Activated CD4-positive, alpha-beta memory T cell treated with anti-CD3 and anti-CD28 coated beads, Interleukin-2, amount 10 ng/mL, durations not matched to agents 7 days and 5 days (primary cell): ENCODE measurements at regions of chr9 and their contacts with region 1.

Region 1: GRCh38 chr9:111621895-111622480 is 9.1 kb upstream of the DNAJC25 start:
- DNase-seq: no peak
- H3K4me3 Mint-ChIP-seq: no peak overlapping the region
- H3K27ac Mint-ChIP-seq: no peak overlapping the region
- H3K4me1 Mint-ChIP-seq: no peaks in the 10 kb centered on the region
- H3K27me3 Mint-ChIP-seq: peaks cover 12% of the 10 kb centered on the region

Region 2: GRCh38 chr9:111597817-111598729 is 23.9 kb before region 1 on chr9:
- CTCF ChIA-PET with region 1: interaction called, 21 read pairs
- POLR2A ChIA-PET with region 1: no interaction called
- DNase-seq: peak; percentile 69
- H3K4me3 Mint-ChIP-seq: peak overlapping the region; percentile 75
- H3K27ac Mint-ChIP-seq: no peak overlapping the region
- H3K4me1 Mint-ChIP-seq: peaks cover 25% of the 10 kb centered on the region
- H3K27me3 Mint-ChIP-seq: peaks cover 32% of the 10 kb centered on the region